HCT116 (cell line): ENCODE measurements at regions of chr14 and their contacts with region 1.

Region 1: GRCh38 chr14:64294672-64295413 is 672 bp upstream of the ESR2 start:
- DNase-seq: peak; percentile 38
- ATAC-seq: peak; percentile 98
- H3K4me3 ChIP-seq: no peak overlapping the region; a peak in 1 of 4 replicates
- H3K27ac ChIP-seq: no peak overlapping the region
- H3K4me1 ChIP-seq: peaks cover 0 to 8% of the 10 kb centered on the region in 2 experiments; a peak in 2 of 4 replicates
- H3K27me3 ChIP-seq: no peaks in the 10 kb centered on the region
- CTCF ChIP-seq: peak; percentile 75 to 92 (median 88)
- POLR2A ChIP-seq: no peak
- RAD21 ChIP-seq: peak; percentile 83

Region 2: DNA sequence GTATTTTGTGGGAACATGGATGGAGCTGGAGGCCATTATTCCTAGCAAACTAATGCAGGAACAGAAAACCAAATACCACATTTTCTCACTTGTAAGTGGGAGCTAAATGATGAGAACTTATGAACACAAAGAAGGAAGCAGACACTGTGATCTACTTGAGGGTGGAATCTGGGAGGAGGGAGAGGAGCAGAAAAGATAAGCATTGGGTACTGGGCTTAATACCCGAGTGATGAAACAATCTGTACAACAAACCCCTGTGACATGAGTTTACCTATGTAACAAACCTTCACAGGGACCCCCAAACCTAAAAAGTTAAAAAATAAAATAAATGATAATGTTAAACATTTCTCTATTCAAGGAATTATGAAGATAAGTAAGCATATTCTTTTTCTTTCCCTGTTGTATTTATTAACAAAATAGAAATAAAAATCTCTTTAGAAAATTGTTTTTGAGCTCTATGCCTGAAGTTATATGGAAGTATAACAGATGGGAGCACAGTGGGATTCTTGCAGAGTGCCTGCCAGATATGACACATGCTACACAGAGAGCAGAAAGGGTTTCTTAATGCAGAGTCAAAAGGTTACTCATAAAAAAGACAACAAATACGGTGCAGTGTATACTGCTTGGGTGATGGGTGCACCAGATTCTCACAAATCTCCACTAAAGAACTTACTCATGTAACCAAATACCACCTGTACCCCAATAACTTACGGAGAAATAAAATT is 494.0 kb before region 1 on chr14:
- CTCF ChIA-PET with region 1: interaction called, 5 read pairs
- POLR2A ChIA-PET with region 1: no interaction called
- RAD21 ChIA-PET with region 1: no interaction called
- intact Hi-C with region 1: loop called (anchors 1 kb)
- DNase-seq: no peak
- ATAC-seq: no peak
- H3K4me3 ChIP-seq: no peak overlapping the region
- H3K27ac ChIP-seq: no peak overlapping the region
- H3K4me1 ChIP-seq: peaks cover 0 to 6% of the 10 kb centered on the region in 2 experiments; a peak in 2 of 4 replicates
- H3K27me3 ChIP-seq: no peaks in the 10 kb centered on the region
- CTCF ChIP-seq: no peak
- POLR2A ChIP-seq: no peak
- RAD21 ChIP-seq: no peak

Region 3: DNA sequence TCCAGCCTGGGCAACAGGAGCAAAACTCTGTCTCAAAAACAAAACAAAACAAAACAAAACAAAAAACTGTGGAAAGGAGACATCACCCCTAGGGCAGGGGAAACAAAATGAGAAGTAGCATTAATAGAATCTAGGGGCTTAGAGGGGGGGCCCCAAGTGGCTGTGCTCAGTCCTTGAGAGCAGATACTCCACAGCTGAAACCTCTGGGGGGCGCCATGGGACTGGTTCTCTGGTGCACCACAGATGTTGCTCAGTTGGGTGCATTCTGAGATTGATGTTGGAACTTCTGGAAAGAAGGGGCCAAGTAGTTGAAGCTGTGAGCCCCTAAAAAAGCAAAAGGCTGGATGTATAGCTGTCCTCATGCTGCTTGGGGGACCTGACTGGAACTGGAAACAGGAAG is 453.9 kb before region 1 on chr14:
- CTCF ChIA-PET with region 1: interaction called, 3 read pairs
- POLR2A ChIA-PET with region 1: no interaction called
- RAD21 ChIA-PET with region 1: no interaction called
- intact Hi-C with region 1: loop called (anchors 2 kb)
- DNase-seq: no peak
- ATAC-seq: peak; percentile 70
- H3K4me3 ChIP-seq: no peak overlapping the region
- H3K27ac ChIP-seq: no peak overlapping the region
- H3K4me1 ChIP-seq: no peaks in the 10 kb centered on the region
- H3K27me3 ChIP-seq: no peaks in the 10 kb centered on the region
- CTCF ChIP-seq: peak; percentile 38 to 58 (median 51); a peak in 5 of 6 replicates
- POLR2A ChIP-seq: no peak
- RAD21 ChIP-seq: peak; percentile 57

Region 4: DNA sequence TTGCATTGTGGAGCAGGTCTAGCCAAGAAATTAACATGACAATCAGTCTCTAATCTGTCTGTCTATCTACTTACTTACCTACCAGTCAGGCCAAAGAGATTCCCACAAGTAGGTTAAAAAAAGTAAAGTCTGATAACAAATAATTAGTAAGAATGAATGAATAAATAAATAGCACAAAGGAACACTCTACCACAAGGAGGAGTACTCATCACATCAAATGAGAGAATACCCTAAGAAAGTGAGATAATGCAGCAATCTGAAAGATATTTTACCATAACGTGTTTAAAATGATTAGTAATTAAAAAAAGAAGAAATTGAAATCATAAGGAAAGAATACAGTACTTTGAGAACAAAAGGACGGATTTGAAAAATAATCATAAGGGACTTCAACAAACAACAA is 254.8 kb before region 1 on chr14:
- CTCF ChIA-PET with region 1: no interaction called
- POLR2A ChIA-PET with region 1: no interaction called
- RAD21 ChIA-PET with region 1: no interaction called
- intact Hi-C with region 1: loop called (anchors 2 kb)
- DNase-seq: no peak
- ATAC-seq: no peak
- H3K4me3 ChIP-seq: no peak overlapping the region
- H3K27ac ChIP-seq: no peak overlapping the region
- H3K4me1 ChIP-seq: no peaks in the 10 kb centered on the region
- H3K27me3 ChIP-seq: no peaks in the 10 kb centered on the region
- CTCF ChIP-seq: peak in 2 of 3 experiments; percentile 28; a peak in 2 of 6 replicates
- POLR2A ChIP-seq: no peak
- RAD21 ChIP-seq: peak; percentile 50